ACHN (cell line): ENCODE measurements at regions of chr10 and their contacts with region 1.

Region 1: GRCh38 chr10:36779234-36779846 is 346.1 kb upstream of the ANKRD30A start:
- DNase-seq: peak; percentile 37

Region 2: GRCh38 chr10:35642027-35642792 is 1137.1 kb before region 1 on chr10 and contains the start of gene FZD8:
- in situ Hi-C with region 1: loop called (anchors 25 kb)
- DNase-seq: peak; percentile 85

Region 3: DNA sequence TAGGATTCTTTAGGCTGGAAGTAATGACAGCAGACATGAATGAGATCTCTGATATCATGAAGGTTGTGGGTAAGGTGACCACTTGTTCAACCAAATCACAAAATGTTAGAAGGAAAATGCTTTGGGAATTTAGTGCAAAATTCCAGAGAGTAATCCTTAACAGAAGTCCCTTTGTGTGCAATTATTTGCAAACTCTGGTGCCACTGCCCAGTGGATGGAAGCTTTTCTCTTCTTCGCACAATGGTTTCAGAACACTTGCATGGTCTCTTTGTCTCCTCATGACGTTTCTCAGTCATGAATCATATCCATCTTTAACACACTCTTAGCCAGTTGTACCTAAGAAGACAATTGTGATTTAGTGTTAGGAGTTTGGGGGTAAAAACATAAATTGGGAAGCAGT is 224.3 kb before region 1 on chr10:
- in situ Hi-C with region 1: no loop called
- DNase-seq: no peak

Region 4: GRCh38 chr10:36899651-36900050 is 120.3 kb after region 1 on chr10:
- in situ Hi-C with region 1: no loop called
- DNase-seq: no peak